GM12878 (cell line): ENCODE measurements at regions of chr15 and their contacts with region 1.

Region 1: DNA sequence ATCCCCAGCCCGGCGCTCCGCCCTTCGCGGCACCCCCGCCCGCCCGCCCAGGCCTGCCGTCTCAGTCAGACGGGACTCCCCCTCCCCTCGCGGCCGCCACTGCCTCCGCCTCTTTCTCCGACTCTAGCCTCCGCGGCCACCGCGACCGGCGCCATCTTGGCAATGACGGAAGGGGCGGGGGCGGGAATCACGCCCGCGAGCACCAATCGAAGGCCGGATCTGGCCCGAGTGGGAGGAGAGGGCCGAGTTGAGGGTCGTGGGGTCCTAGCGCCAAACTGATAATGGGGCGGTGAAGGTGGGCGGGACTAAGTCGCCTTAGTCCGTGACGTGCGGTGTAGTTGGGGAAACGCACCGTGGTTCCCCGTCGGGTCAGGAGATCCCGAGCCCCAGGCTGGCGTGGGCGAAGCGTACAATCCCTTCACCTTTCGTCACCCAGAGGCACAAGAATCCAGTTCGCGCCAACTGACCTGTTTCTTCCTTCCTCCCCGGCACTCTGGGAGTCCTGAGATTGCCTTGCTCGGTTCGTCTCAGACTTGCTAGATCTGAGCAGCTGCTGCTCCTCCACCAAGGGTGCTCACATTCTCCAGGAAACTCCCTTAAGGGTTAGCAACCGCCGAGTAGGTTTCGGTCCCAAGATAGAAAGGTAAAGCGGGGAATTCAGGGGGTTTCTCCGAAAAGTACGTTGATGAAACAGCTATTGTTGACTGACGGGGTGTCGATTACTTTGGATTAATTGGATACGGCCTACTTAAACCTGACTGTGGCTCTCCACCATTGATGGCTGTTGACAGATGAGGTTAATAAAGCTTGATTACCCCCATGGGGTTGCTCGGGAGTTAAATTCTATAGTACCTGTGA is at the start of gene DENND4A:
- DNase-seq: peak; percentile 97
- ATAC-seq: peak; percentile 79
- H3K4me3 ChIP-seq: peak within 1 kb of the TSS; percentile 96
- H3K27ac ChIP-seq: peak within 1 kb of the TSS; percentile 99
- H3K4me1 ChIP-seq: peaks cover 18% of the 10 kb centered on the region
- H3K27me3 ChIP-seq: no peaks in the 10 kb centered on the region
- CTCF ChIP-seq: no peak
- EP300 ChIP-seq: peak; percentile 90 to 96
- POLR2A ChIP-seq: peak; percentile 92
- RAD21 ChIP-seq: no peak
- polyA plus RNA-seq, gene DENND4A: 14.2 to 15.4 TPM

Region 2: GRCh38 chr15:65312400-65312916 is 479.9 kb before region 1 on chr15:
- CTCF ChIA-PET with region 1: no interaction called
- POLR2A ChIA-PET with region 1: no interaction called
- RAD21 ChIA-PET with region 1: no interaction called
- SMC1A ChIA-PET with region 1: no interaction called
- in situ Hi-C with region 1: no loop called
- intact Hi-C with region 1: no loop called
- DNase-seq: no peak
- ATAC-seq: no peak
- H3K4me3 ChIP-seq: no peak overlapping the region
- H3K27ac ChIP-seq: no peak overlapping the region
- H3K4me1 ChIP-seq: no peaks in the 10 kb centered on the region
- H3K27me3 ChIP-seq: no peaks in the 10 kb centered on the region
- CTCF ChIP-seq: no peak
- EP300 ChIP-seq: no peak
- POLR2A ChIP-seq: no peak
- RAD21 ChIP-seq: no peak

Region 3: DNA sequence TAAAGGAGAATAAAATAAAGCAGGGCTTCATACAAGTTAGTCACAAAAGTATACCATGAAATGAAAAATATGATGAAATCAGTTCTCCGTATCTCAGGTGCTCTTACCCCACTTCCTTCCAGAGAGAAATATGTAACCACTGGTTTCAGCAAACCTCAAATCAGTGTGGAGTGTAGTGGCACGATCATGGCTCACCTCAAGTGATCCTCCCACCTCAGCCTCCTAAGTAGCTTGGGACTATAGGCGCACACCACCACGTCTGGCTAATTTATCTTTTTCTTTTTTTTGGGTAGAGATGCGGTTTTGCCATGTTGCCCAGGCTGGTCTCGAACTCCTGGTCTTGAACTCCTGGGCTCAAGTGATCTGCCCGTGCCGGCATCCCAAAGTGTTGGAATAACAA is 24.5 kb before region 1 on chr15:
- CTCF ChIA-PET with region 1: interaction called, 7 read pairs
- POLR2A ChIA-PET with region 1: interaction called, 5 read pairs
- RAD21 ChIA-PET with region 1: interaction called, 16 read pairs
- SMC1A ChIA-PET with region 1: interaction called, 9 read pairs
- in situ Hi-C with region 1: no loop called
- intact Hi-C with region 1: no loop called
- DNase-seq: no peak
- ATAC-seq: peak; percentile 27
- H3K4me3 ChIP-seq: no peak overlapping the region
- H3K27ac ChIP-seq: no peak overlapping the region
- H3K4me1 ChIP-seq: peaks cover 6% of the 10 kb centered on the region
- H3K27me3 ChIP-seq: no peaks in the 10 kb centered on the region
- CTCF ChIP-seq: no peak
- EP300 ChIP-seq: no peak
- POLR2A ChIP-seq: no peak
- RAD21 ChIP-seq: no peak

Region 4: DNA sequence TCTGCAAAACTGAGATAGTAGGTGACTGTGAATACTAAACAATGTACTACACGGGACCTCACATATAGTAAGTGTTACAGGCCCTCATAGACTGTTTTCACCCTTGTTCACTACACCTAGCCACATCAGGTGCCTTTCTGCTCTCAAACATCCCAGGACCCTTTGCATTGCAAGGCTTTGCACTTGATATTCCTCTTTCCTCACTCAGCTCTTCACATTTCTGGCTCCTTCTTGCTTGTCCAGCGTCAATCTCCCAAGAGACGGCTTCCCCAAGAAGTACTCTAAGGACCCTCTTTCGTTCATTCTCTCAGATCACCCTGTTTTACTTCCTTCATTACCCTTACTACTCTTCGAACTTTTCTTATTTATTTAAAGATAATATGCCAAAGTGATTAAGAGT is 10.3 kb before region 1 on chr15:
- CTCF ChIA-PET with region 1: interaction called, 6 read pairs
- POLR2A ChIA-PET with region 1: interaction called, 86 read pairs
- RAD21 ChIA-PET with region 1: interaction called, 37 read pairs
- SMC1A ChIA-PET with region 1: interaction called, 28 read pairs
- in situ Hi-C with region 1: no loop called
- intact Hi-C with region 1: no loop called
- DNase-seq: no peak
- ATAC-seq: peak; percentile 38
- H3K4me3 ChIP-seq: no peak overlapping the region
- H3K27ac ChIP-seq: peak overlapping the region; percentile 40
- H3K4me1 ChIP-seq: peaks cover 17% of the 10 kb centered on the region
- H3K27me3 ChIP-seq: no peaks in the 10 kb centered on the region
- CTCF ChIP-seq: no peak
- EP300 ChIP-seq: no peak
- POLR2A ChIP-seq: no peak
- RAD21 ChIP-seq: no peak

Region 5: DNA sequence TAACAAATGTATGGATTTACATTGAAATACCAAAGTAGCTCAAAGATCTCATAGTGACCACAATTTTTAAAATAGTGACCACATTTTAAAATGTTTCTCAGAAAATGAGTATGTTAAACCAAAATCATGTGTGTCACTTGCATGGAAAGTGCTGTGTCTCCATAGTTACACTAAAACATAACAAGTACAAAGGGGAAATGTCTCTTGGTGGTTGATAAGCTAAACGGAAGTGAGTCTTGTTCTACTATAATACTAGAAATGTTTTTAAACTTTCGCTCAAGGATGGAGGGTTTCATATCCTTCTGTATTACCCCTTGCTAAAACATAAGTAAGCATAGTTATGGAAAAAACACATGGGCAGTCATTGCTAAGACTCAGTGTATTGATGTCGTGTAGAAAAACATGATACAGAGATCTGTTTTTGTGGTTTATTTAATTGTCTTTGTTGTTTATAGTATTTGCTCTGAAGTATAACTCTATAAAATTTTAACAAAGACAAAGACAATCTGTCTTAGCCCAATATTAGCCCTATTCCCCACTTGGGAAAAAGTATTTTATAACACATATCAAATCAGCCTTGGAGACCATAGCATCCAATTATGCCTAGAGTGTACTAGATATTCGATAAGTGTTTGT is 26.7 kb after region 1 on chr15:
- CTCF ChIA-PET with region 1: interaction called, 155 read pairs
- POLR2A ChIA-PET with region 1: interaction called, 260 read pairs
- RAD21 ChIA-PET with region 1: interaction called, 344 read pairs
- SMC1A ChIA-PET with region 1: interaction called, 488 read pairs
- in situ Hi-C with region 1: no loop called
- intact Hi-C with region 1: loop called (anchors 2 kb)
- DNase-seq: peak; percentile 78
- ATAC-seq: peak; percentile 78
- H3K4me3 ChIP-seq: no peak overlapping the region
- H3K27ac ChIP-seq: peak overlapping the region; percentile 56
- H3K4me1 ChIP-seq: peaks cover 62% of the 10 kb centered on the region
- H3K27me3 ChIP-seq: no peaks in the 10 kb centered on the region
- CTCF ChIP-seq: no peak
- EP300 ChIP-seq: peak; percentile 100
- POLR2A ChIP-seq: no peak
- RAD21 ChIP-seq: no peak

Region 6: DNA sequence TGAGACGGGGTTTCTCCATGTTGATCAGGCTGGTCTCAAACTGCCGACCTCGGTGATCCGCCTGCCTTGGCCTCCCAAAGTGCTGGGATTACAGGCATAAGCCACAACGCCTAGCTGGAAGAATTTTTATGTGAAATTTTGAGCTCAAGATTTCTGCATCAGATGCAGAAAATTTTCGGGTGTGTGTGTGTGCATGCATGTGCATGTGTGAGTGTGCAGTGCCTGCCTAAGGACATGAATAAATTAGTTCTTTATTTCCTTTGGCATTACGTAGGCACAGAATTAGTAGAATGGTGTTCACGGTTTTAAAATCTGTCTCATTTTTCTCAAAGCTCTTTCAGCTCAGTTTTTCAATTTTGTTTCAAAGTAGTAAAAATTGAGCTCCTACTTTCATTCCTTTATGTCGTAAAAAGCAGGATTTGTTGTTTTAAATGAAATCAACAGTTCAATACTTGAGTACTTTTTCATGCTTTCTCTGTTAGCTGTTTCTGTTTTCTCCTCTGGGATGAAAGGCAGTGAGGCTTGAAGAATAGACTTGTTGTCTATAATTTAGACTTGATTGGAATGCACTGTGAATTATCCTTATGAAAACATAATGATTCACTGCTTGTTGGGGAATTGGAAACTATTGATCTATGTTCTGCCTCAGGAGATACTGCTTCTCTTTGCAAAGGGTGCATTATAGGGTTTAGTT is 53.6 kb after region 1 on chr15:
- CTCF ChIA-PET with region 1: no interaction called
- POLR2A ChIA-PET with region 1: no interaction called
- RAD21 ChIA-PET with region 1: no interaction called
- SMC1A ChIA-PET with region 1: no interaction called
- in situ Hi-C with region 1: no loop called
- intact Hi-C with region 1: no loop called
- DNase-seq: no peak
- ATAC-seq: no peak
- H3K4me3 ChIP-seq: no peak overlapping the region
- H3K27ac ChIP-seq: no peak overlapping the region
- H3K4me1 ChIP-seq: no peaks in the 10 kb centered on the region
- H3K27me3 ChIP-seq: no peaks in the 10 kb centered on the region
- CTCF ChIP-seq: no peak
- EP300 ChIP-seq: no peak
- POLR2A ChIP-seq: no peak
- RAD21 ChIP-seq: no peak

Region 7: GRCh38 chr15:65869127-65869953 is 77.0 kb after region 1 on chr15 and contains the start of gene RAB11A:
- CTCF ChIA-PET with region 1: no interaction called
- POLR2A ChIA-PET with region 1: interaction called, 9 read pairs
- RAD21 ChIA-PET with region 1: interaction called, 18 read pairs
- SMC1A ChIA-PET with region 1: interaction called, 4 read pairs
- in situ Hi-C with region 1: no loop called
- intact Hi-C with region 1: loop called (anchors 5 kb)
- DNase-seq: peak; percentile 85
- ATAC-seq: peak; percentile 95
- H3K4me3 ChIP-seq: peak within 1 kb of the TSS; percentile 71
- H3K27ac ChIP-seq: peak within 1 kb of the TSS; percentile 80
- H3K4me1 ChIP-seq: no peaks in the 10 kb centered on the region
- H3K27me3 ChIP-seq: no peaks in the 10 kb centered on the region
- CTCF ChIP-seq: peak; percentile 45 to 60 (median 45); a peak in 5 of 6 replicates
- EP300 ChIP-seq: no peak
- POLR2A ChIP-seq: peak; percentile 92
- RAD21 ChIP-seq: peak; percentile 33; the same call in 1 of the 2 replicates
- polyA plus RNA-seq, gene RAB11A: 155 to 179 TPM

Region 8: GRCh38 chr15:65888981-65889380 is 96.6 kb after region 1 on chr15:
- CTCF ChIA-PET with region 1: no interaction called
- POLR2A ChIA-PET with region 1: no interaction called
- RAD21 ChIA-PET with region 1: no interaction called
- SMC1A ChIA-PET with region 1: no interaction called
- in situ Hi-C with region 1: no loop called
- intact Hi-C with region 1: no loop called
- DNase-seq: no peak
- ATAC-seq: peak; percentile 26; the same call in 1 of the 3 replicates
- H3K4me3 ChIP-seq: no peak overlapping the region
- H3K27ac ChIP-seq: no peak overlapping the region
- H3K4me1 ChIP-seq: peaks cover 11% of the 10 kb centered on the region
- H3K27me3 ChIP-seq: no peaks in the 10 kb centered on the region
- CTCF ChIP-seq: no peak
- EP300 ChIP-seq: no peak
- POLR2A ChIP-seq: no peak
- RAD21 ChIP-seq: no peak

Region 9: GRCh38 chr15:66066439-66066838 is 274.1 kb after region 1 on chr15:
- CTCF ChIA-PET with region 1: no interaction called
- POLR2A ChIA-PET with region 1: no interaction called
- RAD21 ChIA-PET with region 1: no interaction called
- SMC1A ChIA-PET with region 1: no interaction called
- in situ Hi-C with region 1: no loop called
- intact Hi-C with region 1: no loop called
- DNase-seq: no peak
- ATAC-seq: no peak
- H3K4me3 ChIP-seq: no peak overlapping the region
- H3K27ac ChIP-seq: no peak overlapping the region
- H3K4me1 ChIP-seq: no peaks in the 10 kb centered on the region
- H3K27me3 ChIP-seq: no peaks in the 10 kb centered on the region
- CTCF ChIP-seq: no peak
- EP300 ChIP-seq: no peak
- POLR2A ChIP-seq: no peak
- RAD21 ChIP-seq: no peak